Activated CD4-positive, alpha-beta T cell treated with anti-CD3 and anti-CD28 coated beads for 36 hours (primary cell): ENCODE measurements at regions of chr10 and their contacts with region 1.

Region 1: GRCh38 chr10:11178606-11179515 is 161.2 kb downstream of the CELF2 start:
- DNase-seq: peak; percentile 90
- ATAC-seq: peak; percentile 72
- H3K4me3 Mint-ChIP-seq: no peak overlapping the region
- H3K27ac Mint-ChIP-seq: no peak overlapping the region
- H3K4me1 Mint-ChIP-seq: peaks cover 94% of the 10 kb centered on the region
- H3K27me3 Mint-ChIP-seq: no peaks in the 10 kb centered on the region

Region 2: DNA sequence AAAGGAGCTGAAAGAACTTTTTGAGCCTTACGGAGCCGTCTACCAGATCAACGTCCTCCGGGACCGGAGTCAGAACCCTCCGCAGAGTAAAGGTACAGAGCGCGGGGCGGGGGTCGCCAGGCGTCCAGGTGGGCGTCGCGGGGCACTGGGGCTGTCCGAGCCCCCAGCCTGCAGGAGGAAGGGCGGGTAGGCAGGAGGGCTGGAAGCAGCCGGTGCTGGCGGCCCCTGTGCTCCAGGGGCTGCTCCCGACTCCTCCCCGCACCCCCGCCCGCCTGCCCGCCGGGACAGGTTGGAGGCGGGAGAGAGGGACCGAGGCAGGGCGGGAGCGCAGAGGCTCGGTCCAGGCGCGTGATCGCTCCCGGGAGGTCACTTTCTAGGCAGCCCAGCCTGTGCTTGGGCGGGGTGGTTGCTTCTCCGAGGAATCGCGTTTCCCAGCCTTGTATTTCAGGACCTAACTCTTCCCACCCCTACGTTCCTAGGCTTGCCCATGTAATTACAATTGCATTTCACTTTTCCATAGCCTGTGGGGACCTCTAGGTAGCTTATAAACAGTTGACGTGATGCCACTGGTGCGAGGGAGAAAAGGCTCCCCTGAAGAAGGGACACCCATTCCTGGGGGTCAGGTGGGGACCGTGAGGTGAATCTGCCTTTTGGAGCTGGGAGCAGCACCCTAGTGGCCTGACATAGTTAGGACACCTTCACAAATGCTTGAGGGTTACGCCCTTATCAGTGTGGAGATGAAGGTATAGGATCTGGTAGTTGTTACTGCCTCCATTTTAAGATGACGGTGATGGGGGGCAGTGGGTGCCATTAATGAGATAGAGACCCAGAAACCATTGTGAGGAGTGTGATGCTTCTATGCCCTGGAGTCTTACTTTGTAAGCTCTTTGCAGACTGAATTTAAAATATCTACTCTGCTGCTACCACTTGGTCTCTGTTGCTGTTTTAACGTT is 13.0 kb before region 1 on chr10:
- CTCF ChIA-PET with region 1: interaction called, 30 read pairs
- POLR2A ChIA-PET with region 1: interaction called, 34 read pairs
- intact Hi-C with region 1: loop called (anchors 1 kb)
- DNase-seq: peak; percentile 85
- ATAC-seq: peak; percentile 57
- H3K4me3 Mint-ChIP-seq: no peak overlapping the region
- H3K27ac Mint-ChIP-seq: peak overlapping the region; percentile 99
- H3K4me1 Mint-ChIP-seq: peaks cover 33% of the 10 kb centered on the region
- H3K27me3 Mint-ChIP-seq: no peaks in the 10 kb centered on the region

Region 3: GRCh38 chr10:11209830-11210181 is 30.9 kb after region 1 on chr10:
- CTCF ChIA-PET with region 1: interaction called, 5 read pairs
- POLR2A ChIA-PET with region 1: no interaction called
- intact Hi-C with region 1: loop called (anchors 1 to 2 kb)
- DNase-seq: no peak
- ATAC-seq: peak; percentile 2
- H3K4me3 Mint-ChIP-seq: peak overlapping the region; percentile 63
- H3K27ac Mint-ChIP-seq: peak overlapping the region; percentile 97
- H3K4me1 Mint-ChIP-seq: peaks cover 99% of the 10 kb centered on the region
- H3K27me3 Mint-ChIP-seq: no peaks in the 10 kb centered on the region

Region 4: DNA sequence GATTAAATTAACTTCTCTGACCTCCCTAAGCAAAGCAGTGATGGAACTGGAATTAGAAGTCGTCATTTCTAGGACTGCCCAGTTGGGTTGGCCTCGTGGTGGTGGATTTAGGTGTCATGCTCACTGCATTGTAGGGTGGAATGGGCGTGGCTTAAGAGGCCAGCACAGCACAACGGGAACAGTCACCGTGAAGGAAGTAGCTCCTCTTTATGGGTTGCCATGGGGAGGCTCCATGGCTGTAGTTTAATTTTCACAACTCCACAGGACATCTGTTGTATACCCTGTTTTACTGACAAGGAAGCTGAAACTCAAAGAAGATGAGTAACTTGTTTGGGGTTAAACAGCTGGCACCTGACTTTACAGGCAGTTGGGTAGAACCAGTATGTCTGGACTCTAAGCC is 47.1 kb after region 1 on chr10:
- CTCF ChIA-PET with region 1: interaction called, 5 read pairs
- POLR2A ChIA-PET with region 1: interaction called, 5 read pairs
- intact Hi-C with region 1: loop called in 1 of 2 experiments (anchors 2 kb)
- DNase-seq: peak; percentile 85
- ATAC-seq: peak; percentile 80
- H3K4me3 Mint-ChIP-seq: peak overlapping the region; percentile 47
- H3K27ac Mint-ChIP-seq: peak overlapping the region; percentile 93
- H3K4me1 Mint-ChIP-seq: peaks cover 96% of the 10 kb centered on the region
- H3K27me3 Mint-ChIP-seq: no peaks in the 10 kb centered on the region

Region 5: GRCh38 chr10:11295492-11295891 is 116.6 kb after region 1 on chr10:
- CTCF ChIA-PET with region 1: no interaction called
- POLR2A ChIA-PET with region 1: no interaction called
- intact Hi-C with region 1: no loop called
- DNase-seq: peak; percentile 34
- ATAC-seq: peak; percentile 75
- H3K4me3 Mint-ChIP-seq: no peak overlapping the region
- H3K27ac Mint-ChIP-seq: peak overlapping the region; percentile 63
- H3K4me1 Mint-ChIP-seq: peaks cover 35% of the 10 kb centered on the region
- H3K27me3 Mint-ChIP-seq: no peaks in the 10 kb centered on the region

Region 6: DNA sequence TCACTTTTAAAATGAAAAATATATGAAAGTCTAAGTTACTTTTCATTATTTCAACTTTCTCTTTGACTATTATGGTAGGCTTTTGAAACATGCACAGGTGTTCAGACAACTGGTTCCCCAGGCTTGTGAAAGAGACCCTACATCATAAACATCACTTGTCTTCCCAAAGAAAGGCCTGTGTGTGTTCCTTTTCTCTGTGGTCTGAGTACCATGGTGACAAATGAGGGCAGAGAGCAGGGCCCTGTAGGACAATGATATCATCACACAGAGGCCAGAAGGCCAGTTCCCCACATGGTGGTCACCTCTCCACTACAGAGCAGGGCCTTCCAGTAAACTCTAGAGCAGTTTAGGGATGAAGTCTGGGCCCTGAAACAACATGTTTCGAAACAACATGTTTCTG is 143.8 kb after region 1 on chr10:
- CTCF ChIA-PET with region 1: no interaction called
- POLR2A ChIA-PET with region 1: no interaction called
- intact Hi-C with region 1: loop called in 1 of 2 experiments (anchors 5 kb)
- DNase-seq: no peak
- ATAC-seq: no peak
- H3K4me3 Mint-ChIP-seq: no peak overlapping the region
- H3K27ac Mint-ChIP-seq: peak overlapping the region; percentile 77
- H3K4me1 Mint-ChIP-seq: peaks cover 83% of the 10 kb centered on the region
- H3K27me3 Mint-ChIP-seq: no peaks in the 10 kb centered on the region